ENCODE measurements at regions of chr16 and their contacts with region 1.

Region 1: GRCh38 chr16:73047518-73048291 is at the start of gene ZFHX3:
- DNase-seq: no peak
- ATAC-seq: peak; percentile 67
- total RNA-seq, gene ZFHX3: 8.4 TPM

Region 2: DNA sequence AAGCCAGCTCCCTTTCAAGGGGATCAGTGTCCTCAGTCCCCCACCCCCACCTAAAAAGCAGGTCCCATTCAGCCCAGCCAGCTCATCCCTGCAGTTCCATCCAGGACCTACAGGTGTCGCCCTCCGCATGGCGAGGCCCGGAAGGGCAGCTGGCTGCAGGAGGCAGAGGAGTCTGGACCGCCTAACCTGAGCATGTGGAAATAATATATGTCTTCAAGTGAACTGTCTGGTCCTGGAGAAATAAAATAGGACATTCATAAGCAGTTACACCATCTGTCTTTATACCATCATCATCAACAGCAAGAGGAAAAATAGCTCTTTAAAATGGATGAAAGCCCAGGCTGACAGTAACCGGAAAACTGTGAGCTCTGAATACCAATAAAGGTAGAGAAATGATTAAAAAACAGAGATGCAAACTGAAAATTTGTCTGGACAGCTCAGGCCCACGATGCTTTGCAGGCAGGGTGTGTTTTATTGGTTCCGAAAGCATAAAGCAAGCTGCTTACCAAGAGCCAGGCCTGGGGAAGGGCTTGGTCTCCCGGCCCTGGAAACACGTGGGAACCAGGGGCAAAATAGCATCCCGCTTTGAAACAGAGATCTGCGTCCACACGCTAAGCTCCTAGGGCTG is 215.0 kb before region 1 on chr16:
- intact Hi-C with region 1: loop called (anchors 5 kb)
- DNase-seq: peak; percentile 91
- ATAC-seq: peak; percentile 93

Region 3: DNA sequence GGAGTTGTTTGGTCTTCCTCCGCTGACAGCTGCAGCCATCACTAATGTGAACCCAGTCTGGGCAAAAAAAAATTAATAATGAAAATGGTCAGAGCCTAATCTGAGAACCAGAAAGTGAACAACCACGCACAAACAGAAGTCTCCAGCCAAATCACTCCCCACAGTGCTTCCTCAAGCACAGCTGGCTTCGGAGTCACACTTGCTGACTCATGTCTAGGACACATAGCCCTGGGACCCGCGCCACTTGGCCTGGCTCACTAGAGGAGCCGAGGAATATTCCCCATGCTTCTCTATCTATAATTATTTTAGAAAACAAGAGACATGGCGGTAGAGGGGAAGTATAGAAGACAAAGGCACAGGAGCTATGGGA is 108.9 kb before region 1 on chr16:
- intact Hi-C with region 1: loop called (anchors 5 kb)
- DNase-seq: peak; percentile 97
- ATAC-seq: peak; percentile 96

Region 4: GRCh38 chr16:73095885-73096421 is 48.2 kb after region 1 on chr16:
- intact Hi-C with region 1: no loop called
- DNase-seq: no peak
- ATAC-seq: peak; percentile 16

Region 5: GRCh38 chr16:73420676-73421075 is 373.0 kb after region 1 on chr16:
- intact Hi-C with region 1: no loop called
- DNase-seq: no peak
- ATAC-seq: no peak

Measured in Right ventricle myocardium inferior (tissue), 1 donor.